ENCODE measurements at regions of chr17 and their contacts with region 1.

Region 1: DNA sequence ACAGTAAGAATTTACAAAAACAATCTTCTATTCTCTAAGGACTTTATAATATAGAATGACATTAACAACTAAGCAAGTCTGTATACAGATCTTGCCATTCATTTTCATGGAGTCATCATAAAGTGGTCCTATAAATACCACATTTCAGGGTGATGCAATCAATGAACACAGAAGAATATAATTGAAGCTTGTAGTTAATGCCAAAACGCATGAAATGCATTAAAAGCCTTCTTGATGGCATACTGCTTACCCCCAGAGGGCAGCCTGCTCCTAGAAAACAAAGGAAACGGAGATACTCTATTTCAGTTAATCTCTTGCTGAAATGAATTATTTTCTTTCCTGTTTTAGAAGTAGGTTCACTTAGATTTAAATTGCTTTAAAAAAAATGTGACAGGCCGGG is 45.2 kb upstream of the STAC2 start:
- DNase-seq: peak; percentile 72
- H3K4me3 Mint-ChIP-seq: no peak overlapping the region
- H3K27ac Mint-ChIP-seq: peak overlapping the region; percentile 26
- H3K4me1 Mint-ChIP-seq: no peaks in the 10 kb centered on the region
- H3K27me3 Mint-ChIP-seq: no peaks in the 10 kb centered on the region
- CTCF ChIP-seq: peak; percentile 58

Region 2: DNA sequence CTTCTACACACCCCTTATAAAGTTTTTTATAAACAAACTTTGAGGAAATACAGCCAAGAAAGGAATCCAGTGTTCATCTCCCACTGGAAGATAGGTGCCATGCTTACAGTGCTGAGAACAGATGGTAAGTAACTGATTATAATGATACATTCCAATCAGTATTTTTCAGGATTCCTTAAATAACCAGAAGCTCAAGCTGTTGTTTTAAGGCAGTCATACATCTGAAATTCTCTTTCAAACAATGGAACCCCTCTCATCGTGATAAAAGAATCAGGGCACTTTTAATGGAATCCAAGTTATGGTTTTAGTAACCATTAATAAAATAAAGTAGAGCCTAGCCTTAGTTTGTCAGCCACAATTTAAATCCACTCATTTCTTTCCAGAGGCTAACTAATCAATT is 10.9 kb after region 1 on chr17:
- CTCF ChIA-PET with region 1: interaction called, 23 read pairs
- intact Hi-C with region 1: no loop called
- DNase-seq: no peak
- H3K4me3 Mint-ChIP-seq: no peak overlapping the region
- H3K27ac Mint-ChIP-seq: peak overlapping the region; percentile 45
- H3K4me1 Mint-ChIP-seq: peaks cover 14% of the 10 kb centered on the region
- H3K27me3 Mint-ChIP-seq: no peaks in the 10 kb centered on the region
- CTCF ChIP-seq: no peak

Region 3: GRCh38 chr17:39304188-39304587 is 33.3 kb after region 1 on chr17:
- CTCF ChIA-PET with region 1: no interaction called
- intact Hi-C with region 1: no loop called
- DNase-seq: no peak
- H3K4me3 Mint-ChIP-seq: no peak overlapping the region
- H3K27ac Mint-ChIP-seq: no peak overlapping the region
- H3K4me1 Mint-ChIP-seq: no peaks in the 10 kb centered on the region
- H3K27me3 Mint-ChIP-seq: no peaks in the 10 kb centered on the region
- CTCF ChIP-seq: no peak

Region 4: GRCh38 chr17:39393736-39394135 is 122.8 kb after region 1 on chr17:
- CTCF ChIA-PET with region 1: interaction called, 10 read pairs
- intact Hi-C with region 1: loop called (anchors 2 kb)
- DNase-seq: no peak
- H3K4me3 Mint-ChIP-seq: no peak overlapping the region
- H3K27ac Mint-ChIP-seq: no peak overlapping the region
- H3K4me1 Mint-ChIP-seq: no peaks in the 10 kb centered on the region
- H3K27me3 Mint-ChIP-seq: no peaks in the 10 kb centered on the region
- CTCF ChIP-seq: no peak